ENCODE measurements at regions of chr1 and their contacts with region 1.

Region 1: GRCh38 chr1:61842871-61843514 is 100.7 kb downstream of the PATJ start:
- DNase-seq: no peak
- ATAC-seq: no peak
- H3K4me3 ChIP-seq: no peak overlapping the region
- H3K27ac ChIP-seq: peak overlapping the region; percentile 36 to 82
- H3K4me1 ChIP-seq: peaks cover 2 to 11% of the 10 kb centered on the region in 2 donors
- H3K27me3 ChIP-seq: no peaks in the 10 kb centered on the region

Region 2: GRCh38 chr1:60825593-60825992 is 1017.4 kb before region 1 on chr1:
- intact Hi-C with region 1: no loop called
- DNase-seq: no peak
- ATAC-seq: peak; percentile 44
- H3K4me3 ChIP-seq: no peak overlapping the region
- H3K27ac ChIP-seq: no peak overlapping the region
- H3K4me1 ChIP-seq: no peaks in the 10 kb centered on the region
- H3K27me3 ChIP-seq: no peaks in the 10 kb centered on the region

Region 3: DNA sequence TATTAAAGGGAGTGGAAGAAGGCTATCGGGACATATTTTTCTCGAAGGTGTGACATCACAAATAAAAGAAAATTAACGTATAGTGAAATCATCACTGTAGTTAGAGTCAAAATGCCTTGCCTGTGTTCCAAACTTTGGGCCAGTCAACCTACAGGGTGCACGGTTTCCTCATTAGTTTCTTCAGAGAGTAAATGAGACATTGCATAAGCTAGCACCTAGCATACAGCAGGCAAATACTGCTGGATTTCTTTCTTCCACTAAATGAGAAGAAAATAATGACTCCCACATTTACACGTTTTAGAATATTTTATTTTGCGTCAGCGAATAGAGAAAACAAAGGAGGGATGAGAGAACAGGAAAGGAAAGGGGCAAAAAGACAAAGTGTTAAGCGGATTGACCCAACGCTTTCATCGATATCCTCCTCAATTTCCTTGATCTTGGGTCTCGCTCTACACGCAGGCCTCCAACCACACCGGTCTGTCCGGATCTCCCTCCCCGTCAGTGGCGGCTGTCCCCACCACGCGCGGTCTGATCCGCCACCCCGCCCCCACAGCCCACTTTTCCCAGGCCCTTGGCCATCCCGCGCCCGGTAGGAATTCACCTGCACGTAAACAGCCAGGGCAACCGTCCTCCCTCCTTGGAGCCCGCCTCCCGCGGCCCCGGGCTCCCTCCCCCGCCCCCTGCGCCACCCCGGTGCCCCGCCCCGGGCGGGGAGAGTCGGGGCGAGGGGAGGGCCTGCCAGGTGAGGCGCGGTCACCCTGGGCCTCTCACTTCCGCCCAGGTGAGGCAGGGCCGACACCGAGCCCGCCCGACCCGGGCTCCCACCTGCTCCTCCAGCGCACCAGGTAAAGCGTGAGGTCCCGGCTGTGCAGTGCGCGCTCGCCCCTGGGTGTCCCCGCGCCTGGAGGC is 101.0 kb before region 1 on chr1 and contains the start of gene PATJ:
- intact Hi-C with region 1: loop called (anchors 5 kb)
- DNase-seq: peak; percentile 64 to 87
- ATAC-seq: peak; percentile 82
- H3K4me3 ChIP-seq: peak within 1 kb of the TSS; percentile 77 to 96
- H3K27ac ChIP-seq: peak within 1 kb of the TSS; percentile 78 to 92
- H3K4me1 ChIP-seq: peaks cover 0 to 4% of the 10 kb centered on the region in 2 donors
- H3K27me3 ChIP-seq: no peaks in the 10 kb centered on the region
- total RNA-seq, gene PATJ: 36.1 to 47.1 TPM

Region 4: GRCh38 chr1:61887076-61887867 is 44.3 kb after region 1 on chr1:
- intact Hi-C with region 1: no loop called
- DNase-seq: no peak
- ATAC-seq: no peak
- H3K4me3 ChIP-seq: no peak overlapping the region
- H3K27ac ChIP-seq: peak overlapping the region in 1 of 2 donors; percentile 20
- H3K4me1 ChIP-seq: peaks cover 2 to 13% of the 10 kb centered on the region in 2 donors
- H3K27me3 ChIP-seq: no peaks in the 10 kb centered on the region